CD8-positive, alpha-beta T cell (primary cell): ENCODE measurements at regions of chr22 and their contacts with region 1.

Region 1: DNA sequence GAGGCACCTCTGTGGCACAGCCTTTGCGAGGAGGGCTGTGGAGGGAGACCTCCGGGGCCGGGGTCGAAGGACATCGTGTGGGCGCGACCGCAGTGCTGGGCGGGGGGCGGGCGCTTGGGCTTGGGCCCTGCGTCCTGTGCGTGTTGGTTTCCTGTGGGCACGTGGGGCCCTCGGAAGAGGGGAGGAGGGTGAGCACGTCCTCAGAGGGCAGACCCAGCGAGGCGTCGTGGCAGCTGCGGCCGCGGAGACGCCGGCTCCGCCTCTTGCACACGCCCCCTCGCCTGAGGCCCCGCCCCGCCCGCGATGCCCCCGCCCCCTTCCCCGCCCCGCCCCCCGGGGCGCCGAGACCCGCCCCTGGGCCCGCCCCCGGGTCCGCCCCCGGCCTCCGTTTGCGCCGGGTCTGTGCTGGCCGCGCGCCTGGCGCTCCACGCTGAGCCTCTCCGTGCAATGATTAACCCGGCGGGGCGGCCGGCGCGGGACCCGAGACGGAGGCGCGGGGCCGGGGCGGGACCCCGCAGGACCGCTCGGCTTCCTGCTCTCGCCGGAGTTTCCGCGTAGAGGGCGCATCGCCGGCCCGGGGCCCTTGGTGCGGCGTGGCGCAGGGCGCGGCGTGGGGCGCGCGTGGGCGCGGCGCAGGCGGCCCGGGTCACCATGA is at the start of gene PRR5:
- DNase-seq: peak; percentile 57 to 94 (median 83)
- ATAC-seq: peak; percentile 89
- H3K4me3 ChIP-seq: peak within 1 kb of the TSS; percentile 60 to 76
- H3K4me3 Mint-ChIP-seq: peak within 1 kb of the TSS; percentile 84
- H3K27ac ChIP-seq: peak within 1 kb of the TSS; percentile 61 to 77
- H3K27ac Mint-ChIP-seq: peak within 1 kb of the TSS; percentile 86
- H3K4me1 ChIP-seq: peaks cover 50% of the 10 kb centered on the region
- H3K4me1 Mint-ChIP-seq: peaks cover 46% of the 10 kb centered on the region
- H3K27me3 ChIP-seq: no peaks in the 10 kb centered on the region
- H3K27me3 Mint-ChIP-seq: no peaks in the 10 kb centered on the region
- CTCF ChIP-seq: no peak
- total RNA-seq, gene PRR5: 47.6 to 49.3 TPM

Region 2: DNA sequence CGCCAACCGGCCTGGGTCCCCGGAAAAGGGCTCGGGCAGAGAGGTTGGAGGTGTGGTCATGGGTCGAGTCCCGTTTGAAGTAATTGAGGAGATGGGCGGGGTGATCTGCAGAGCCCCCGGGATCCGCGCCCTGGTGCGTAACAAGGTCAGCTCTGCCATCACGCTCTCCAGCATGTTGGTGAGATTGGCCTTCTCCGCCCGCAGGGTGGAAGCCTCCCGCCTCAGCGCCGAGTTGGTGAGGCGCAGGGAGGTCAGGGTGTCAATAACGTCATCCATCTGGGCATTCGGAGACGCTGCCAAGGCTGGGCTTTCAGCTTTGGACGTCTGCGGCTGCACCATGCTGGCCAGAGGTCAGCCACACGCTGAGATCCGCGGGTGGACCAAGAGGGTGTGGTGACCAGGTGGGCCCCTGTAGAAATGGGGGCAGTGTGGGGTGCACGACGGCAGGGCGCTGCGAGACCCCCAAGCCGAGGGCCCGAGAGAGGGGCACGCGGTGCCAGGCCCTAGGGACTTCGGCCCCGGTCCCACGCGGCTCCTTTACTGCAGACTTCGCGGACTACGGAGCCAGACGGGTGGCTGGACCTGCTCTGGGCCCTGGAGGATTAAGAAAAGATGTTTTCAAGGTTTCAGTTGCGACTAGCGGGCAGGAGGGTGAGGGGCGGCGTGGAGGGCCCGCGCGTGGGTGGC is 204.6 kb before region 1 on chr22:
- CTCF ChIA-PET with region 1: no interaction called
- POLR2A ChIA-PET with region 1: no interaction called
- intact Hi-C with region 1: loop called in 1 of 2 experiments (anchors 2 kb)
- DNase-seq: peak in 2 of 9 experiments; percentile 30 to 54
- ATAC-seq: no peak
- H3K4me3 ChIP-seq: peak overlapping the region; percentile 46 to 65
- H3K4me3 Mint-ChIP-seq: peak overlapping the region; percentile 77
- H3K27ac ChIP-seq: peak overlapping the region; percentile 64 to 81
- H3K27ac Mint-ChIP-seq: peak overlapping the region; percentile 81
- H3K4me1 ChIP-seq: peaks cover 44% of the 10 kb centered on the region
- H3K4me1 Mint-ChIP-seq: peaks cover 38% of the 10 kb centered on the region
- H3K27me3 ChIP-seq: no peaks in the 10 kb centered on the region
- H3K27me3 Mint-ChIP-seq: no peaks in the 10 kb centered on the region
- CTCF ChIP-seq: no peak

Region 3: GRCh38 chr22:44586999-44587736 is 114.8 kb before region 1 on chr22:
- CTCF ChIA-PET with region 1: no interaction called
- POLR2A ChIA-PET with region 1: no interaction called
- intact Hi-C with region 1: no loop called
- DNase-seq: peak in 2 of 9 experiments; percentile 32 to 38
- ATAC-seq: no peak
- H3K4me3 ChIP-seq: no peak overlapping the region
- H3K4me3 Mint-ChIP-seq: no peak overlapping the region
- H3K27ac ChIP-seq: no peak overlapping the region
- H3K27ac Mint-ChIP-seq: no peak overlapping the region
- H3K4me1 ChIP-seq: no peaks in the 10 kb centered on the region
- H3K4me1 Mint-ChIP-seq: peaks cover 3% of the 10 kb centered on the region
- H3K27me3 ChIP-seq: no peaks in the 10 kb centered on the region
- H3K27me3 Mint-ChIP-seq: peaks cover 23% of the 10 kb centered on the region
- CTCF ChIP-seq: no peak

Region 4: GRCh38 chr22:44684506-44685383 is 17.2 kb before region 1 on chr22:
- CTCF ChIA-PET with region 1: interaction called, 32 read pairs
- POLR2A ChIA-PET with region 1: interaction called, 3 read pairs
- intact Hi-C with region 1: loop called (anchors 1 to 2 kb)
- DNase-seq: peak; percentile 72 to 92 (median 84)
- ATAC-seq: peak; percentile 82
- H3K4me3 ChIP-seq: no peak overlapping the region
- H3K4me3 Mint-ChIP-seq: peak overlapping the region; percentile 58
- H3K27ac ChIP-seq: no peak overlapping the region
- H3K27ac Mint-ChIP-seq: peak overlapping the region; percentile 74
- H3K4me1 ChIP-seq: peaks cover 50% of the 10 kb centered on the region
- H3K4me1 Mint-ChIP-seq: peaks cover 45% of the 10 kb centered on the region
- H3K27me3 ChIP-seq: no peaks in the 10 kb centered on the region
- H3K27me3 Mint-ChIP-seq: no peaks in the 10 kb centered on the region
- CTCF ChIP-seq: peak; percentile 95

Region 5: DNA sequence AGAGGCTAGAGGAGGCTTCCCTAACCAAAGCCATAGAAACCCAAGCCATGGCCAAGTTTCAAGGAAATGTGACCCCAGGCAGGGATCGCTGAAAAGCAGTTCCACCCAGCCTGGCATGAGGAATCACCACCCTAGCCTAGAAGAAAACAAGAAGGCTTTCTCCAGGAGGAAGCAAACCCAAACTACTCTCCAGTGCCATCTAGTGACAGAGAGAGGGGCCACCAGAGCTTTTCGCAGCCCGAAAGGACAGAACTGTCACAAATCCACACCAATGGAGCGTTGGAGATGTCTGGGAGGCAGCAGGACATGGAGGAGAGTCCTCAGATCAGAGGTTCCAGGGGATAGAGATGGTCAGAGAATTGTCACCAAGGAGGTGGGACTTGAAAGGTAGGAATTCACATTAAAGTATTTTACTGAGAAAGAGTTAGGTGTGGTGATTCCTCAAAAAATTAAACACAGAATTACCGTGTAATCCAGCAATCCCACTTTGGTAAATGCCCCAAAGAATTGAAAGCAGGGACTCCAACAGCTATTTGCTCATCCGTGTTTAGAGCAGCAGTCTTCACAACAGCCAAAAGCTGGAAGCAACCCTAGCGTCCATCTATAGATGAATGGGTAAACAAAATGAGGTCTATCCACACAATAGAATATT is 394.4 kb after region 1 on chr22:
- CTCF ChIA-PET with region 1: no interaction called
- POLR2A ChIA-PET with region 1: no interaction called
- intact Hi-C with region 1: loop called in 1 of 2 experiments (anchors 5 kb)
- DNase-seq: peak; percentile 7 to 58 (median 37)
- ATAC-seq: peak; percentile 44
- H3K4me3 ChIP-seq: no peak overlapping the region
- H3K4me3 Mint-ChIP-seq: no peak overlapping the region
- H3K27ac ChIP-seq: no peak overlapping the region
- H3K27ac Mint-ChIP-seq: no peak overlapping the region
- H3K4me1 ChIP-seq: no peaks in the 10 kb centered on the region
- H3K4me1 Mint-ChIP-seq: no peaks in the 10 kb centered on the region
- H3K27me3 ChIP-seq: no peaks in the 10 kb centered on the region
- H3K27me3 Mint-ChIP-seq: peaks cover 34% of the 10 kb centered on the region
- CTCF ChIP-seq: peak; percentile 54

Region 6: DNA sequence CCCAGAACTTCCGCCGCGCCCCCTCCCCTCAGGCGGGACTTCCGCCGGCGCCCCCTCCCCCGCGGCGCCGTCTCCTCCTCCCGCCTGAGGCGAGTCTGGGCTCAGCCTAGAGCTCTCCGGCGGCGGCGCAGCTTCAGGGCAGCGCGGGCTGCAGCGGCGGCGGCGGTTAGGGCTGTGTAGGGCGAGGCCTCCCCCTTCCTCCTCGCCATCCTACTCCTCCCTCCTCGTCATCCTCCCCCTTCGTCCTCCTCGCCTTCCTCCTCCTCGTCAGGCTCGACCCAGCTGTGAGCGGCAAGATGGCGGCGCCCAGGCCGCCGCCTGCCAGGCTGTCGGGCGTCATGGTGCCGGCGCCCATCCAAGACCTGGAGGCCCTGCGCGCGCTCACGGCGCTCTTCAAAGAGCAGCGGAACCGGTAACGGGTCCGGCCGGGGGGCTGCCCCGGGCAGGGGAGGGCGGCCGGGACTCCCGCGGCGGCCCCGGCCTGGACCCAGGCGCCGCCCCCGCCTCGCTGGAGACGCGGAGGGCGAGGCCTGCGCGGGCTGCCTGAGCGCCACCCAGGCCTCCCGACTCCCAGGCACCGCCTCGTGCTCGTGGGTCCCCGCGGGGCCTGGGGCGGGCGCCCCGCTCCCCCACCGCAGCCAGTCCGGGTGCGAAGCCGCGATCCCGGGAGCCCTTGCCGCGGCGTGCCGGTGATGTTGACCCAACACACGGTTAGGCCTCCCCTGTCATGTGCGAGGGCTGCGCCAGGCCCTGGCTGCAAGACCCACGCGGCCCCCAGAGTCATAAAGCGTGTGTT is 970.0 kb after region 1 on chr22 and contains the start of gene ATXN10:
- CTCF ChIA-PET with region 1: no interaction called
- POLR2A ChIA-PET with region 1: no interaction called
- intact Hi-C with region 1: loop called in 1 of 2 experiments (anchors 10 kb)
- DNase-seq: peak; percentile 33 to 81 (median 60)
- ATAC-seq: peak; percentile 76
- H3K4me3 ChIP-seq: peak within 1 kb of the TSS; percentile 58 to 64
- H3K4me3 Mint-ChIP-seq: peak within 1 kb of the TSS; percentile 90
- H3K27ac ChIP-seq: peak within 1 kb of the TSS; percentile 52 to 60
- H3K27ac Mint-ChIP-seq: peak within 1 kb of the TSS; percentile 92
- H3K4me1 ChIP-seq: peaks cover 27% of the 10 kb centered on the region
- H3K4me1 Mint-ChIP-seq: peaks cover 44% of the 10 kb centered on the region
- H3K27me3 ChIP-seq: no peaks in the 10 kb centered on the region
- H3K27me3 Mint-ChIP-seq: peaks cover 3% of the 10 kb centered on the region
- CTCF ChIP-seq: no peak
- total RNA-seq, gene ATXN10: 35.4 to 37.7 TPM